OCI-LY7 (cell line): ENCODE measurements at regions of chrX and their contacts with region 1.

Region 1: DNA sequence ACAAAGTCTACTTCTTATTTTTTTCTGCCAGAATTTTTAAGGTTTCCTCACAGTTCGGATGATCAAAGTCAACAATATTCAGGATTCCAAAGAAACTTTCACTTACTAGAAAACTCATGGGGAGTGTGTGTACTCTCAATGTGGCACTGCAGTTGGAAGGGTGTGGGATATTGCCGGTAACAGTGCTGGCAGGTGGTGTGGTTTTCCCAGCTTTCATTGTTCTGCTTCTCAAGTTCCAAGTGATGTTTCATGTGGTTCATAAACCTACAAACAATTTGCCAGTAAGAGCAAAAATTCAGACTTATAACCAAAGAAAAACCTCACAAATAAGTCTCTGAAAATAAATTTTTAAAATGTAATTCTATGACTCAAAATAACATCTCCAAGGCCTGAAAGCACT is 39.8 kb downstream of the ZNF280C start:
- DNase-seq: no peak
- H3K4me3 ChIP-seq: no peak overlapping the region
- H3K27ac ChIP-seq: no peak overlapping the region
- H3K4me1 ChIP-seq: no peaks in the 10 kb centered on the region
- CTCF ChIP-seq: no peak

Region 2: DNA sequence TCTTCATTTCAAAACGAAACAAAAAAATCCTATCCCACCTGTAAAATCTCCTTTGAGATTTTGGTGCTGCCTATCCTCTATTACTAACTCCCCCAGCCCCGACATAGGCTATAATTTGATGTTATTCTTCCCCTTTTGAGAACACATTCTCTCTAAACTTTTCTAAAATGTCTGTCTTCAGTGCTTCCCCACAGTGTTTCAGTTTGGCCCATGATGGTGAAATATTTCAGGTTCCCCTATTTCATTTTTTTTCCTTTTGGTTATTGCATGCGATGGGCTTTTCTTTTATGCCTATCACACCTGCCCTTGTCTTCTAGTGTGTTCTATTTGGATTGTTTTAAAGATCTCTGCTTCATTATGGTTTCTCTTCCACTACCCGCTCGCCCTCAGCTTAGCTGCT is 231.8 kb before region 1 on chrX:
- CTCF ChIA-PET with region 1: no interaction called
- POLR2A ChIA-PET with region 1: interaction called, 11 read pairs
- intact Hi-C with region 1: no loop called
- DNase-seq: no peak
- H3K4me3 ChIP-seq: no peak overlapping the region
- H3K27ac ChIP-seq: no peak overlapping the region
- H3K4me1 ChIP-seq: no peaks in the 10 kb centered on the region
- CTCF ChIP-seq: no peak

Region 3: GRCh38 chrX:130155564-130155963 is 73.3 kb before region 1 on chrX:
- CTCF ChIA-PET with region 1: no interaction called
- POLR2A ChIA-PET with region 1: no interaction called
- intact Hi-C with region 1: no loop called
- DNase-seq: no peak
- H3K4me3 ChIP-seq: no peak overlapping the region
- H3K27ac ChIP-seq: no peak overlapping the region
- H3K4me1 ChIP-seq: no peaks in the 10 kb centered on the region
- CTCF ChIP-seq: no peak

Region 4: DNA sequence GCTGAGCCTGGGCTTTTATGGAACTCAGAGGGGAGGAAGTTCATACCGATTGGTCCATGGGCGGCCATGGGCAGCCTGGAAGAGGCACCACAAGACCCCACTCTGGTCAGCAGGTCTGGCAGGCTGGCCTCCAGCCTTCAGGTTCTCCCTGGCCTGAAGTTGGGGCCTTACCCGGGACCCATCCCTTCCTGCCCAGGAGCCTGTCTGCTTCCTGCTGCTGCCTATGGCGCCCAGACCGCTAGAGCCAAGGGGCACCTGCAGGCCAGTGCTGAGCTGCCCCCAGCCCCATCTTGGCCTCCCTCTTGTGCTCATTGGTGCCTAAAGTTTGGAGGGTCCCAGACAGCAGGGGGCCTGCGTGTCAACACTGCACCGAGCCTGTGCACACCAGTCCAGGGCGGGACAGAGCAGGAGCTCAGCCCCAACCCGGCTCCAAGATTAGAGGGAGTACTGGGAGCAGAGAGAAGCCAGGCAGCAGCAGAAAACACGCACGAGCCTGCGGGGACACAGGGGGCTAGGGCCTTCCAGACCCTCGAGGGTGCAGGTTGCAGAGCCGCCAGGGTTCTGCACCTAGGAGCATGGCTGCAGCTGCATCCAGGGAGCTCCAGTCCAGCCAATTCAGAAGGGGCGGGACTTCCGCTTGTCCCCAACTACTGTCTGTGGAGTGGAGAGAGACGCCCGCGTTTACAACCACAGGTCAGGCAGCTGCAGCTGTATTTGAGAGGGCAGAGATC is 70.6 kb after region 1 on chrX:
- CTCF ChIA-PET with region 1: no interaction called
- POLR2A ChIA-PET with region 1: no interaction called
- intact Hi-C with region 1: no loop called
- DNase-seq: no peak
- H3K4me3 ChIP-seq: no peak overlapping the region
- H3K27ac ChIP-seq: no peak overlapping the region
- H3K4me1 ChIP-seq: no peaks in the 10 kb centered on the region
- CTCF ChIP-seq: no peak